HepG2 (cell line): ENCODE measurements at regions of chr1 and their contacts with region 1.

Region 1: DNA sequence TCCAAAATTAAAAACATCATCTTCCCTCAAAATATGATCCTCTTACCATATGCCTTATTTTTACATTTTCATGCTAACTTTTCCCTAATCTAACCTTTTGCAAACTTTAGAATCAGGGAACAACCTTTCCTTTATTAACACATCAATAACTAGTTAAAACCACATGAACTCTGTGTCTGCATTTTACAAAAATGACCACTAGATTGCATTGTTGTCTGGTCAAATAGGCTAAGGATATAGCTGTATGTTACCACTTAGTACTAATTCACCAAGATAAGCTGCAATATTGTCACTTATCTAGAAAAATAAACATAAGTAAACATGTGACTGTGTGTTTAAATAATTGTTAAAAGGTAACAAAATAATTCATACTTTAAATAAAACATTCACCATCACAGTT is 82.3 kb downstream of the DENND1B start:
- DNase-seq: peak; percentile 15
- ATAC-seq: peak; percentile 61
- H3K4me3 ChIP-seq: no peak overlapping the region
- H3K27ac ChIP-seq: no peak overlapping the region
- H3K4me1 ChIP-seq: peaks cover 16% of the 10 kb centered on the region
- H3K27me3 ChIP-seq: no peaks in the 10 kb centered on the region
- CTCF ChIP-seq: peak; percentile 58
- EP300 ChIP-seq: no peak
- POLR2A ChIP-seq: no peak
- RAD21 ChIP-seq: no peak

Region 2: DNA sequence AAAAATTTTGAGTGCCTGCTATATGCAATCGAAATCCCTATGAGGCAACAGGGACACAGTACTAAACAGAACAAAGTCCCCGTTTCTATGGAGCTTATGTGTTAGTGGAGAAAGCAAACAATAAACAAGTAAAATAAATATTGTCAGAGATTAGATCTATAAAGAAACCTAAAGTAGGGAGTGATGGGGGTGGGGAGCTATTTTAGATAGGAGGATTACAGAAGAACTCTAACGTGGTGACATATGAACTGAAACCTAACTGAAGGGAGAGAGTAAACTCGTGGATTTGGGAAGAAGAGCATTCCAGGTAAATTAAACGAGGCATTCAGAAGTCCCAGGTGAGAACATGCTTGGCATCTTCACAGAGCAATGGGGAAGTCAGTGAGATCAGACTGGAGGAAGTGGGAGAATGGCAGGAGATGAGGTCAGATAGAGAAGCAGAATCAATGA is 72.2 kb before region 1 on chr1:
- CTCF ChIA-PET with region 1: no interaction called
- POLR2A ChIA-PET with region 1: no interaction called
- in situ Hi-C with region 1: no loop called
- intact Hi-C with region 1: loop called (anchors 2 kb)
- DNase-seq: peak; percentile 86
- ATAC-seq: peak; percentile 98
- H3K4me3 ChIP-seq: peak overlapping the region; percentile 34 to 59 (median 40); a peak in 5 of 6 replicates
- H3K27ac ChIP-seq: peak overlapping the region; percentile 95
- H3K4me1 ChIP-seq: peaks cover 55% of the 10 kb centered on the region
- H3K27me3 ChIP-seq: no peaks in the 10 kb centered on the region; a peak in 1 of 5 replicates
- CTCF ChIP-seq: no peak
- EP300 ChIP-seq: peak; percentile 93 to 94
- POLR2A ChIP-seq: no peak
- RAD21 ChIP-seq: no peak

Region 3: GRCh38 chr1:197677752-197678295 is 15.1 kb before region 1 on chr1:
- CTCF ChIA-PET with region 1: no interaction called
- POLR2A ChIA-PET with region 1: no interaction called
- in situ Hi-C with region 1: no loop called
- intact Hi-C with region 1: no loop called
- DNase-seq: no peak
- ATAC-seq: no peak
- H3K4me3 ChIP-seq: no peak overlapping the region
- H3K27ac ChIP-seq: no peak overlapping the region
- H3K4me1 ChIP-seq: no peaks in the 10 kb centered on the region
- H3K27me3 ChIP-seq: no peaks in the 10 kb centered on the region
- CTCF ChIP-seq: no peak
- EP300 ChIP-seq: no peak
- POLR2A ChIP-seq: no peak
- RAD21 ChIP-seq: no peak

Region 4: DNA sequence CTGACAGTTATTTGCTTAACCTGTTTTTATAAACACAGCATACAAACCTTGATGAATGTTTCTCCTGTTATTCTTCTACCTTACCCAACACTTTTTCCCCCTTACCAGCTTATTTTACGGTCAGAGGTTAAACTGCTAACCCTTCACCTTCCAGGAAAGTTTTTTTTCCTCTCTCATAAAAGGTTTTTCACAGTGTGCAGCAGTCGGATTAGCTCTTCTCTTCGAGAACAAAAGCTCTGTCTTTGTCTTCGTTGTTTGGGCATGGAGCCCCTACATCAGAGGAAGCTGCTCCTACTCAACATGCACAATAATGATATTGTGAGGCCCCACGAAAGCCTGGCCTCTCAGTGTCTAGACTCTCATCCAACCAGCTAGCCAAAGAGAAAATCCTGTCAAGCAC is 40.4 kb after region 1 on chr1:
- CTCF ChIA-PET with region 1: no interaction called
- POLR2A ChIA-PET with region 1: no interaction called
- in situ Hi-C with region 1: no loop called
- intact Hi-C with region 1: loop called (anchors 2 kb)
- DNase-seq: peak; percentile 78
- ATAC-seq: peak; percentile 89
- H3K4me3 ChIP-seq: peak overlapping the region in 2 of 3 experiments; percentile 3 to 15; a peak in 2 of 6 replicates
- H3K27ac ChIP-seq: peak overlapping the region; percentile 42
- H3K4me1 ChIP-seq: peaks cover 35% of the 10 kb centered on the region
- H3K27me3 ChIP-seq: no peaks in the 10 kb centered on the region
- CTCF ChIP-seq: no peak
- EP300 ChIP-seq: no peak
- POLR2A ChIP-seq: no peak
- RAD21 ChIP-seq: no peak

Region 5: DNA sequence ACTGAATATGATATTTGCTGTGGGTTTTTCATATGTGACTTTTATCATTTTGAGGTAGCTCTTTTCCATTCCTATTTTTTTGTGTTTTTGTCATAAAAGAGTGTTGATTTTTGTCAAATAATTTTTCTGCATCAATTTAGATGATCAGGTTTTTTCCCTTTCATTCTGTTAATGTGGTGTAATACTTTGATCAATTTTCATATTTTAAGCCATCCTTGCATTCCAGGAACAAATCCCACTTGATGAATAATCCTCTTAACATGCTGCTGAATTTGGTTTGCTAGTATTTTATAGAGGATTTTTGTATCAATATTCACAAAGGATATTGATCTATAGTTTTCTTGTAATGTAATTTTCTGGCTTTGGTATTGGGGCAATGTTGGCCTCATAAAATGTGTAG is 183.9 kb after region 1 on chr1:
- CTCF ChIA-PET with region 1: no interaction called
- POLR2A ChIA-PET with region 1: no interaction called
- in situ Hi-C with region 1: no loop called
- intact Hi-C with region 1: no loop called
- DNase-seq: no peak
- ATAC-seq: no peak
- H3K4me3 ChIP-seq: no peak overlapping the region
- H3K27ac ChIP-seq: no peak overlapping the region
- H3K4me1 ChIP-seq: peaks cover 2% of the 10 kb centered on the region; the same call in 1 of the 2 replicates
- H3K27me3 ChIP-seq: no peaks in the 10 kb centered on the region
- CTCF ChIP-seq: no peak
- EP300 ChIP-seq: no peak
- POLR2A ChIP-seq: no peak
- RAD21 ChIP-seq: no peak

Region 6: GRCh38 chr1:198408716-198409115 is 715.8 kb after region 1 on chr1:
- CTCF ChIA-PET with region 1: no interaction called
- POLR2A ChIA-PET with region 1: no interaction called
- in situ Hi-C with region 1: no loop called
- intact Hi-C with region 1: no loop called
- DNase-seq: no peak
- ATAC-seq: no peak
- H3K4me3 ChIP-seq: no peak overlapping the region
- H3K27ac ChIP-seq: no peak overlapping the region
- H3K4me1 ChIP-seq: no peaks in the 10 kb centered on the region
- H3K27me3 ChIP-seq: no peaks in the 10 kb centered on the region
- CTCF ChIP-seq: no peak
- EP300 ChIP-seq: no peak
- POLR2A ChIP-seq: no peak
- RAD21 ChIP-seq: no peak